ENCODE measurements at regions of chr9 and their contacts with region 1.

Region 1: GRCh38 chr9:113401027-113401792 is at the start of gene ALAD:
- DNase-seq: peak; percentile 99
- H3K4me3 Mint-ChIP-seq: peak within 1 kb of the TSS; percentile 91
- H3K27ac Mint-ChIP-seq: peak within 1 kb of the TSS; percentile 78
- H3K4me1 Mint-ChIP-seq: peaks cover 19% of the 10 kb centered on the region
- H3K27me3 Mint-ChIP-seq: no peaks in the 10 kb centered on the region
- total RNA-seq, gene ALAD: 21.4 to 22.9 TPM

Region 2: GRCh38 chr9:113150670-113151611 is 250.3 kb before region 1 on chr9 and contains the start of gene SLC31A2:
- CTCF ChIA-PET with region 1: no interaction called
- POLR2A ChIA-PET with region 1: no interaction called
- intact Hi-C with region 1: loop called (anchors 5 kb)
- DNase-seq: peak; percentile 91
- H3K4me3 Mint-ChIP-seq: peak within 1 kb of the TSS; percentile 80
- H3K27ac Mint-ChIP-seq: peak within 1 kb of the TSS; percentile 64
- H3K4me1 Mint-ChIP-seq: peaks cover 27% of the 10 kb centered on the region
- H3K27me3 Mint-ChIP-seq: no peaks in the 10 kb centered on the region
- total RNA-seq, gene SLC31A2: 5.1 to 6.7 TPM

Region 3: GRCh38 chr9:113221003-113221799 is 180.0 kb before region 1 on chr9 and contains the starts of genes FKBP15 and SLC31A1:
- CTCF ChIA-PET with region 1: interaction called, 6 read pairs
- POLR2A ChIA-PET with region 1: interaction called, 5 read pairs
- intact Hi-C with region 1: loop called (anchors 2 kb)
- DNase-seq: peak; percentile 98
- H3K4me3 Mint-ChIP-seq: peak within 1 kb of the TSS; percentile 94
- H3K27ac Mint-ChIP-seq: peak within 1 kb of the TSS; percentile 92
- H3K4me1 Mint-ChIP-seq: peaks cover 34% of the 10 kb centered on the region
- H3K27me3 Mint-ChIP-seq: no peaks in the 10 kb centered on the region
- total RNA-seq, gene FKBP15: 25.8 to 27.7 TPM
- total RNA-seq, gene SLC31A1: 12.1 to 12.5 TPM

Region 4: DNA sequence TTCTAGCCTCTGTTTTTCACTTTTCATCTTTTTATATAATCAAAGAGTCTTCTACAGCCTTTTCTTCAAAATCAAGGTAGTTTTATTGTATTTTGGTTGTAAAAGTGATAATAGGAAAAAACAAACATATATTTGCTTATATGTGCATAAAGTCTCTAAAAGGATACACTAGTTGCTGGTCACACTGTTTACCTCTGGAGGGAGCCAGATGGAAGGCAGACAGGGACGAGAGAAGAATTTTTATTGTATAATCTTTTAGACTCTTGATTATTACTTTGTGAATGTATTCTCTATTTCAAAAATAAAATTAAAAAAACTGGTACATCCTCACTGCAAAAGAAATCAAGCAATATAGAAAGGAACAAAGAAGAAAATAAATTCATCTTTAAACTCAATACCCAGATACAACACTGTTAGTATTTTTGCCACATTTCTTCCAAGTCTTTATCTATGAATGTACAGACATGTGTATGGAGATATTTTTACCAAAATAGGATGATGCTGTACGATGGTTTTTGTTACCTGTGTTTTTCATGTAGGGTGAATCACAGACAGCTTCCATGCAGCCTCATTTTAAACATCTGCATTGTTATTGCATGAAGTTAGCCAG is 91.9 kb before region 1 on chr9:
- CTCF ChIA-PET with region 1: interaction called, 4 read pairs
- POLR2A ChIA-PET with region 1: no interaction called
- intact Hi-C with region 1: loop called (anchors 1 kb)
- DNase-seq: peak; percentile 32
- H3K4me3 Mint-ChIP-seq: no peak overlapping the region
- H3K27ac Mint-ChIP-seq: no peak overlapping the region
- H3K4me1 Mint-ChIP-seq: no peaks in the 10 kb centered on the region
- H3K27me3 Mint-ChIP-seq: peaks cover 3% of the 10 kb centered on the region

Region 5: DNA sequence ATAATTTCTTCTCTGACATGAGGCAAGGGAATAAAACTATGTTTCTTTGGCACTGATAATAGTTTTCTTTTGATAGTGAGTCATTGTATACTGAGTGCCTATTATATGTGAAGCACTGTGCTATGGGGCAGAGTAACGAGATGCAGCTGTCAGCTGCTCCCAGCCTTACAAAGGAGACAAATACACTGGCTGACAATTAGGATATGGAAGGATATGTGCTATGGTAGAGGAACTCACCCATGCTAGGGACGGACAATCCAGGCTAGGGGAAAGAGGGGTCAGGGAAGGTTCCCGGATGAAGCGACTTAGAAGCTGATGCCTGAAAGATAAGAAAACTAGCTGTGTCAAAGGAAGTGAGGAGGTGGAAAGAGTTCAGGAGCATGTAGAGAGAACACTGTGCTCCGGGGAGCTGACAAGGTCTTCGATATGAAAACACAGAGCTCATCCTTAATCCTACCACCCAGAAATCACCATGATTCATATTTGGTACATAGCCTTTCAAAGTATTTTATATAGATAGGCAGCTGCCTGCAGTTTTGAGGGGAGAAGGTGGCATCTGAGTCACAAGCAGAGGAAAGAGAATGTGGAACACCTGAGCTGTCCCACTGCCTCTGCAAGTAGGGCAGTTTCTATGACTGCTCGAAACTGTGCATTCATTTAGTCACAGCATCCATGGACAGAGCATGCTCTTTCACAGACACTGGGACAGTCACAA is 39.7 kb before region 1 on chr9:
- CTCF ChIA-PET with region 1: interaction called, 3 read pairs
- POLR2A ChIA-PET with region 1: no interaction called
- intact Hi-C with region 1: loop called (anchors 1 kb)
- DNase-seq: peak; percentile 57
- H3K4me3 Mint-ChIP-seq: no peak overlapping the region
- H3K27ac Mint-ChIP-seq: peak overlapping the region; percentile 55
- H3K4me1 Mint-ChIP-seq: peaks cover 11% of the 10 kb centered on the region
- H3K27me3 Mint-ChIP-seq: peaks cover 5% of the 10 kb centered on the region

Region 6: DNA sequence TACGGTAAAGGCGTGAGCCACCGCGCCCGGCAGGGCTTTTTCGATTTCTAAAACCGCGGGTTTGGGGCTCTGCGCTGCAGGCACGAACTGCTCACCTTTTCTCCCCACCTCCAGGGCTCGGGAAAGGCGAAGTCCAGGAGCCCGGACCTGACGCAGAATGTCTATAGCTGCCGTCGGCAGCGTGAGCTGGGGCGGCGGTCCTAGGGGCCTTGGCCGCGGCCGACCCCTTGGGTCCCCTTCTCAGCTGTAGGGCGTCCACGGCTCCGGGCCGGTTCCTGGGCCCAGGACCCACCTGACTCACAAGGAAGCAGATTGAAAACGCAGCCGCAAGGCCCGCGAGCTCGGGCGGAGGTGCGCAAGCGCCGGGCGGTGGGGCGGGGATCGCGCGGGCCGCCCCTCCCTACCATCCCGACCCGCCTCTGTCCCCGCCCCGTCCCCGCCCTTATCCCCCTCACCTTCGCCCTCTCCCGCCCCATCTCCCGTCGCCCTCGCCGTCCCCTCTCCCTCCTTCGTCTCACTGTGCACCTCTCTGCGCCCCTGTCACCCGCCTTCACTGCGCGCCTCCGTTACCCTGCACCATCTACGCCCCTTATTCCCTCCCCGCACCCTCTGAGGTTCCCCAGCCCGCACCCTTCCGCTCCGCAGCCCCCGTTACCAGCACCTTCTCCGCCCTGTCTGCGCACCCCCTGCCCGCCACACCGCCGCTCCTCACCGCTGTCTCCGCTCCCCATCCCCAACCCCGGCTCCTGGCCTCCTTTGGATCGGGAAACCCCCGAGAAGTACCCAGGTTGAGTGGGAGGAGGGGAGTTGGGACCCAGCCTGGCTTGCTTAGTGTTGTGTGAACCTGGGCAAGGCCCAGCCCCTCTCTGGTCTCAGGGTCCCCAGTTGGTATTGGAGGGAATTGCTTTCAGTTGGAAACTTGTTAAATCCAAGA is 24.3 kb before region 1 on chr9 and contains the start of gene HDHD3:
- CTCF ChIA-PET with region 1: interaction called, 5 read pairs
- POLR2A ChIA-PET with region 1: interaction called, 5 read pairs
- intact Hi-C with region 1: loop called (anchors 1 kb)
- DNase-seq: peak; percentile 89
- H3K4me3 Mint-ChIP-seq: peak within 1 kb of the TSS; percentile 80
- H3K27ac Mint-ChIP-seq: peak within 1 kb of the TSS; percentile 81
- H3K4me1 Mint-ChIP-seq: peaks cover 17% of the 10 kb centered on the region
- H3K27me3 Mint-ChIP-seq: no peaks in the 10 kb centered on the region
- total RNA-seq, gene HDHD3: 17.2 to 17.7 TPM

Region 7: DNA sequence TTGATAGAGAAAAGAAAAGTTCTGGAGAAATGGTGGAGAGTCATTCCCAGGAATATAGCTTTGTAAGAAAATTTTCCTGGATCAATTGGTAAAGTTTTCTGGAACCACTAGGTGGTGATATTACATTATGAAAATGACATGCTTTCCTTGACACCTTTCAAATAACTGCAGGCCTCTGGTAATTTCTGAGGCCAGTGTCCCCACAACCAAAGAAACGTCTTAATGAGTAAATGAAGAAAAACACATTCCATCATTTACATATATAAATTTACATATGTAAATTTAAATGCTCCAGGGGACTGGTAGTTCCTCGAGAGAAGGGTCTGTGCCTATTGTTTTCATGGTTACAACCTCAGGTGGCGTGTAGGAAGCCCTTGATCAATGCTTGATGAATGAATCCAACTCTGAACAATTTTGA is 45.1 kb after region 1 on chr9:
- CTCF ChIA-PET with region 1: interaction called, 11 read pairs
- POLR2A ChIA-PET with region 1: no interaction called
- intact Hi-C with region 1: no loop called
- DNase-seq: no peak
- H3K4me3 Mint-ChIP-seq: no peak overlapping the region
- H3K27ac Mint-ChIP-seq: peak overlapping the region; percentile 55
- H3K4me1 Mint-ChIP-seq: no peaks in the 10 kb centered on the region
- H3K27me3 Mint-ChIP-seq: no peaks in the 10 kb centered on the region

Region 8: DNA sequence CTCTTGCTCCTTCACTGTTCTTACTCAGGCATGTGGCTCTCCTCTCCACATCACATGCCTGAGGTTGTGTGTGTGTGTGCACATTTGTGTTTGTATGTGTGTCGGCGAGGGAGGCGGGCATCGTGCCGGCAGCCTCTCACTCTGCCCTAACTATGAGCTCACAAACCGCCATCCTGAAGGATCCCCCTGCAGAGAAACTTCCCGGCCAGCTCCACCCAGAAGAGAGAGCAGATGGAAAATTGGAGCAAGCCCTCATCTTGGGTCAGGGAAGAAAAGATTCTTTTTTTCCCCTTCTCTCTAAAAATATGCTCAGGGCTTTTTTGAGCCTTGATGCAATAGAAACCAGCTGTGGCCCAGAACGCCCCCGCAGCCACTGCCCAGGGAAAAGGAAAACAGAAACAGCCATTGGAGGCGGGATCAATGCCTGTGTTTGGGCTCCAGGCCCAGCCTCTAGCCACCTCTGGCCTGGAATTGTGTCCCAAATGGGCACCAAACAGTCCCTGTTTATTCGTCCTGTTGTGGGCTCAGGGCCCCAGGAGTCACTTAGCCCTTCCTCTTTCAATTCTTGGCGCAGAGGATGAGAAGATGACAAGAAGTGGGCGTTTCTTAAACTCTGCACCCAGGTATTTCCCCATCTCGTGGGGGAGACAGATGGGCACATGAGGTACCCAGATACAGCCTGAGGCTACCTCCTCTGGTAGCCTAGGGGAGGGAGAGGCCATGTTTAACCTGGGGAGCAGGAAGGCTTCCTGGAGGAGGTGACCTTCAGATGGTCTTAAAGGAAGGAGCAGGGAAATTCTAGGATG is 213.8 kb after region 1 on chr9:
- CTCF ChIA-PET with region 1: no interaction called
- POLR2A ChIA-PET with region 1: no interaction called
- intact Hi-C with region 1: no loop called
- DNase-seq: peak; percentile 65
- H3K4me3 Mint-ChIP-seq: peak overlapping the region; percentile 40
- H3K27ac Mint-ChIP-seq: peak overlapping the region; percentile 83
- H3K4me1 Mint-ChIP-seq: peaks cover 47% of the 10 kb centered on the region
- H3K27me3 Mint-ChIP-seq: no peaks in the 10 kb centered on the region

Region 9: GRCh38 chr9:113741886-113742854 is 341.0 kb after region 1 on chr9:
- CTCF ChIA-PET with region 1: no interaction called
- POLR2A ChIA-PET with region 1: no interaction called
- intact Hi-C with region 1: no loop called
- DNase-seq: no peak
- H3K4me3 Mint-ChIP-seq: no peak overlapping the region
- H3K27ac Mint-ChIP-seq: no peak overlapping the region
- H3K4me1 Mint-ChIP-seq: no peaks in the 10 kb centered on the region
- H3K27me3 Mint-ChIP-seq: peaks cover 6% of the 10 kb centered on the region

Measured in activated CD4-positive, alpha-beta memory T cell treated with anti-CD3 and anti-CD28 coated beads for 36 hours (primary cell).